Vagina (tissue), 2 donors: ENCODE measurements at regions of chr19 and their contacts with region 1.

Region 1: GRCh38 chr19:51338563-51339312 is 3.2 kb downstream of the VSIG10L start:
- DNase-seq: no peak
- H3K4me3 ChIP-seq: peak overlapping the region; percentile 47 to 81
- H3K27ac ChIP-seq: peak overlapping the region; percentile 84
- H3K4me1 ChIP-seq: peaks cover 21% of the 10 kb centered on the region
- H3K27me3 ChIP-seq: no peaks in the 10 kb centered on the region
- CTCF ChIP-seq: peak; percentile 62 to 95 (median 80)
- POLR2A ChIP-seq: no peak

Region 2: GRCh38 chr19:51097166-51097738 is 241.5 kb before region 1 on chr19:
- intact Hi-C with region 1: loop called (anchors 10 kb)
- DNase-seq: no peak
- H3K4me3 ChIP-seq: no peak overlapping the region
- H3K27ac ChIP-seq: no peak overlapping the region
- H3K4me1 ChIP-seq: peaks cover 8% of the 10 kb centered on the region
- H3K27me3 ChIP-seq: no peaks in the 10 kb centered on the region
- CTCF ChIP-seq: peak; percentile 2 to 32 (median 29)
- POLR2A ChIP-seq: no peak

Region 3: GRCh38 chr19:51327066-51328001 is 11.4 kb before region 1 on chr19:
- intact Hi-C with region 1: no loop called
- DNase-seq: no peak
- H3K4me3 ChIP-seq: no peak overlapping the region
- H3K27ac ChIP-seq: no peak overlapping the region
- H3K4me1 ChIP-seq: peaks cover 6% of the 10 kb centered on the region
- H3K27me3 ChIP-seq: no peaks in the 10 kb centered on the region
- CTCF ChIP-seq: no peak
- POLR2A ChIP-seq: no peak

Region 4: DNA sequence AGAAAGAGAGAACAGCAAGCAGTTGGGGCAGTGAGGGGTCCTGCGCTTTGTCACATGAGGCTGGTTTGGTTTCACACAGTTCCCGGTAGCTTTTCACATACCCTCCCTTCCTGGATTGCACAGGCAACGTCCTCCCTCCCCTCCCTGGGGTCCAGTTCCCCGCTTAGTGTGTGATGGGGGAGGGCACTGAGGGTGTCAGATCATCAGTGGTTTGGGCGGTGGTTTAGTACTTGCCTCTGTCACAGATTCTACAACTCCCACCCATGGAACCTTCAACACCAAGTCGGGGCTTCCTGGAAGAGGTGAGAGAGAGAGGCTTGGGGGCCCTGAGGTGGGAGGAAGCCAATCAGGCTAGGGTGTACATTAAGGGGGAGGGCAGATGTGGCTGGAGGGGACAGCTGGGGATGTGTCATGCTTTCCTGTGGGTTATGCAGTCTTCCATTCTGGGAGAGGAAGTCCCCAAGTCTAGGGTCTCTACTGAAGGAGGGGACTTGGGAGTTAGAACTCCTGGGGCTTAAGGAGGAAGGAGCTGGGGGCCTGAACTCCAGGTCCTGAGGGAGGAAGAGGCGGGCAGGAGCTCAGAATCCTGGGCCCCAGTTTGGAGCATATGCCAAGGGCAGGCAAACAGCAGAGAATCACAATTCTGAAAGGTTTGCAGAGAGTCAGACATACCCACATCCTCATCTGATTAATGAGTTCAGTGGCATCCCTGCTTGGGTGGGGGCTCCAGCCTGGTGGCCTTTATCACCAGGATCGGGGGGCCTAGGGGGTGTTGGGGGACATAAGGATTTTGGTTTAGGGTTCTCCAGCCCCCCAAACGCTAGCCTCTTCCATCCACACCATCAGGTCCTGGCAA is 34.1 kb after region 1 on chr19 and contains the start of gene NKG7:
- intact Hi-C with region 1: no loop called
- DNase-seq: no peak
- H3K4me3 ChIP-seq: peak within 1 kb of the TSS in 1 of 2 donors; percentile 4
- H3K27ac ChIP-seq: no peak within 1 kb of the TSS
- H3K4me1 ChIP-seq: peaks cover 8% of the 10 kb centered on the region
- H3K27me3 ChIP-seq: no peaks in the 10 kb centered on the region
- CTCF ChIP-seq: no peak
- POLR2A ChIP-seq: no peak
- total RNA-seq, gene NKG7: 3.4 TPM

Region 5: GRCh38 chr19:51393959-51394836 is 55.5 kb after region 1 on chr19:
- intact Hi-C with region 1: loop called (anchors 10 kb)
- DNase-seq: peak in 1 of 2 donors; percentile 96
- H3K4me3 ChIP-seq: peak overlapping the region; percentile 37 to 40
- H3K27ac ChIP-seq: peak overlapping the region; percentile 78
- H3K4me1 ChIP-seq: peaks cover 14% of the 10 kb centered on the region
- H3K27me3 ChIP-seq: no peaks in the 10 kb centered on the region
- CTCF ChIP-seq: peak in 1 of 3 experiments; percentile 21
- POLR2A ChIP-seq: no peak

Region 6: GRCh38 chr19:51460164-51460992 is 121.6 kb after region 1 on chr19:
- intact Hi-C with region 1: no loop called
- DNase-seq: no peak
- H3K4me3 ChIP-seq: no peak overlapping the region
- H3K27ac ChIP-seq: no peak overlapping the region
- H3K4me1 ChIP-seq: no peaks in the 10 kb centered on the region
- H3K27me3 ChIP-seq: no peaks in the 10 kb centered on the region
- CTCF ChIP-seq: no peak
- POLR2A ChIP-seq: no peak

Region 7: DNA sequence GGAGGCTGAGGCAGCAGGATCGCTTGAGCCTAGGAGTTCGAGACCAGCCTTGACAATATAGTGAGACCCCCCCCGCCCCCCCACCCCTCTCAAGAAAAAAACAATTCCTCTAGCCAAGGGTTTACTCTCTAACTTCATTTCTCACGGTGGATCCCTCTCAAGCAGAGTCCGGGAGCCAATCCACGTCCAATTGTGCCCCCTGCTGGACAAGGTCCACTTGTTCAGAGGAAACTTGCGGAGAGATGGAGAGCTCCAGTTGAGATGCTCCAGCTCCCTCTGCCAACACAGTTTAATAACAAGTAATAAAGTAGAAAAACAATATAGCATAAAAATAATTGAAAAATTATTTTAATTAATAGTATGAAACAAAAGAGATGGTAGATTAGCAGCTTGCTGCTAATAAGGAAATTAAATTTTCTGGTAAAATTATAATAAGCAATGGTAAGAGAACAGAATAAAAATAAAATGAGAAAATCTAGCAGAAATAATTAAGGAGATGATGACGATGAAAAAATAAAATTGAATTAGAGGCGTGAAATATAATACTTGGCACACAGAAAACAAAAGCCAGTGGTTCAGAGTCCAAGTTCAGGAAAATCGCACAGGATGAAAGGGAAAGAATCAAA is 322.4 kb after region 1 on chr19:
- intact Hi-C with region 1: no loop called
- DNase-seq: no peak
- H3K4me3 ChIP-seq: no peak overlapping the region
- H3K27ac ChIP-seq: no peak overlapping the region
- H3K4me1 ChIP-seq: no peaks in the 10 kb centered on the region
- H3K27me3 ChIP-seq: no peaks in the 10 kb centered on the region
- CTCF ChIP-seq: peak in 2 of 3 experiments; percentile 21 to 38
- POLR2A ChIP-seq: no peak